ENCODE measurements at regions of chr1 and their contacts with region 1.

Region 1: DNA sequence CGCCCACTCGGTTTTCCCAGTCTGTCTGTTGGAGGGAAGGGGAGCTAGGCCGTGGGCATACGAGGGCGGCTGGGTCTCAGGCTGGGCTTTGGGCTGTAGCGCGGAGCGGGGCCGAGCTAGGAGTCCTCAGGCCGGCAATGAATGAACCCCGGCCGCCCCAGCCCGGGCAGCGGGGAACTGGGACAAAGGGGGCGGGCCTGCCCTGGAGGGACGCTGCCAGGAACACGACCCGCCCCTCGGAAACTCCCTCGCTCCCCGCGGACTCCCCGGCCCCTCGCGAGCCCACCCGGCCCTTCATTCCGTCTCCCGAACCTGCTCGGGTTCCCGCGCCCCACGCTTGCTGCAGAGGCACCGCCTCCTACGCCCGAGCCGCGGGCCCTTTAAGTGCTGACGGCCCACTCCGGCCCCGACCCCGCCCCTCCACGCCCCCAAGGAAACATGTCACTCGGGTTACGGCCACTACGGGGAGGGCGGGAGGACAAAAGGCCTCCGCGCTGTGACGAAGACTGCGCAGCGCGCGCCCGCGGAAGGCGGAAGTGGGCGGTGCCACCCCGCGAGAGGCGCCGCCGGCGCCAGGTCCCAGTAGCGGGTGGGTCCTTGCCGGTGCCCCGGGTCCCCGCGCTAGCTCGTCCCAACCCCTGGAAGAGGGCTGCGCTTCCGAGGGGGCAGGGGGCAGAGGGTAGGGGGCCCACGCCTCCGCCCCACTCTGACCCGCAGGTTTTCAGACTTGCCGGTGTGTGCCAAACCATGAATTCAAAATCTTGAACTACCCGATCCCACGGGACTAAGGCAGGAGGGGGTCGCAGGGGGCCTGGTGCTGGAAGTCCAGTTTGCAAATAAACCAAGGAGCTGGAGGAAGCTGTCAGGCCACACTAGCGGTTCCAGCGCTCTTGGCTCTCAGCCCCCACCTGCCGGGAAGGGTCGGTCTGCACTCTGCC is at the start of gene GALE:
- DNase-seq: peak; percentile 95 to 97 (median 96)
- H3K4me3 ChIP-seq: peak within 1 kb of the TSS; percentile 64 to 99 (median 91)
- H3K27ac ChIP-seq: peak within 1 kb of the TSS; percentile 70 to 99 (median 96)
- H3K27me3 ChIP-seq: no peaks in the 10 kb centered on the region
- CTCF ChIP-seq: peak in 25 of 56 donors; percentile 7 to 63 (median 27)
- total RNA-seq, gene GALE: 13.2 to 40.0 (median 24.0) TPM

Region 2: DNA sequence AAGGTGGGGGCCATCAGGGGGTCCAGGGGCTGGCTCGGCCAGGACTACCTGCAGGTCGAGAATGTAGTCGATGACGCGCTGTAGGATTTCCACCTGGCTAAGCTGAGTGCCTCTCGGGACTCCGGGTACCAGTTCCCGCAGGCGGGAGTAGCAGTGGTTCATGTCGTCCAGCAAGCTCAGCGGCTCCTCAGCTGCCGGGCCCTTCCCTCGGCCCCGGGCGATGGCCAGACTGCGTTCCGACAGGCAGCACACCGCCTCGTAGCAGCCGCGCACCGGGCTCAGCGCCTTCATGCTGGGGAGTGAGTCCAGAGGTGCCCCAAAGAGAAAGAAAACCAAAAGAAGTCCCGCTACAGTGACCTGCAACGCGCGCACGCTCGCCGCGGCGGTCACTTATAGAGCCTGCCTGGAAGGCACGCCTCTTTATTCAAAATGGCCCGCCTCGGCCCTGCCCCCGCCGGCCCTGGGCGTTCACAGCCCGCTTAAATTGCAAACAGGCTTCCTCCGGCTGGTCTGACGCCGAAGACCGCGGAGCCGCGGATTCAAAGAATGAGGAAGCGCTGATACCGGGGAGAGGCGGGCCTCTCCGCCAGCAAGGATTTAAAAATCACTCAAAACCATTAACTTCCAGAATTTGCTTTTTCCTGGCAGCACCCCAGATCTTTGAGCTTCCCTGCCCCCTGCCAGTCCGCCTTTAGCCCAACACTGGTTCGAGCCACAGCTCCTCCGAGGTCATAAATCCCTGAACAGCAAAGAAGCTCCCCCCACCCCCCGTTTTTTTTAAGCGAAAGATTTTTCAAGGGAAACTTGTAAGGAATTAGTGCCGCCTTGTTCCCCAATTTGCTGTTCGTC is 241.3 kb before region 1 on chr1 and contains the start of gene ID3:
- intact Hi-C with region 1: no loop called
- DNase-seq: peak; percentile 49 to 93 (median 88)
- H3K4me3 ChIP-seq: peak within 1 kb of the TSS; percentile 54 to 95 (median 71)
- H3K27ac ChIP-seq: peak within 1 kb of the TSS; percentile 53 to 96 (median 91)
- H3K27me3 ChIP-seq: peaks cover 0 to 47% (median 7%) of the 10 kb centered on the region in 45 donors
- CTCF ChIP-seq: peak in 32 of 56 donors; percentile 2 to 51 (median 20)
- total RNA-seq, gene ID3: 20.5 to 247 (median 59.8) TPM

Region 3: GRCh38 chr1:23825076-23825761 is 24.6 kb after region 1 on chr1 and contains the start of gene HMGCL:
- intact Hi-C with region 1: loop called (anchors 2 kb)
- DNase-seq: peak; percentile 86 to 93 (median 92)
- H3K4me3 ChIP-seq: peak within 1 kb of the TSS; percentile 66 to 100 (median 96)
- H3K27ac ChIP-seq: peak within 1 kb of the TSS; percentile 74 to 99 (median 96)
- H3K27me3 ChIP-seq: no peaks in the 10 kb centered on the region
- CTCF ChIP-seq: peak in 44 of 56 donors; percentile 0 to 56 (median 23)
- total RNA-seq, gene HMGCL: 13.4 to 38.9 (median 24.4) TPM

Measured in dorsolateral prefrontal cortex (tissue), 120 donors.